ENCODE measurements at regions of chr7 and their contacts with region 1.

Region 1: DNA sequence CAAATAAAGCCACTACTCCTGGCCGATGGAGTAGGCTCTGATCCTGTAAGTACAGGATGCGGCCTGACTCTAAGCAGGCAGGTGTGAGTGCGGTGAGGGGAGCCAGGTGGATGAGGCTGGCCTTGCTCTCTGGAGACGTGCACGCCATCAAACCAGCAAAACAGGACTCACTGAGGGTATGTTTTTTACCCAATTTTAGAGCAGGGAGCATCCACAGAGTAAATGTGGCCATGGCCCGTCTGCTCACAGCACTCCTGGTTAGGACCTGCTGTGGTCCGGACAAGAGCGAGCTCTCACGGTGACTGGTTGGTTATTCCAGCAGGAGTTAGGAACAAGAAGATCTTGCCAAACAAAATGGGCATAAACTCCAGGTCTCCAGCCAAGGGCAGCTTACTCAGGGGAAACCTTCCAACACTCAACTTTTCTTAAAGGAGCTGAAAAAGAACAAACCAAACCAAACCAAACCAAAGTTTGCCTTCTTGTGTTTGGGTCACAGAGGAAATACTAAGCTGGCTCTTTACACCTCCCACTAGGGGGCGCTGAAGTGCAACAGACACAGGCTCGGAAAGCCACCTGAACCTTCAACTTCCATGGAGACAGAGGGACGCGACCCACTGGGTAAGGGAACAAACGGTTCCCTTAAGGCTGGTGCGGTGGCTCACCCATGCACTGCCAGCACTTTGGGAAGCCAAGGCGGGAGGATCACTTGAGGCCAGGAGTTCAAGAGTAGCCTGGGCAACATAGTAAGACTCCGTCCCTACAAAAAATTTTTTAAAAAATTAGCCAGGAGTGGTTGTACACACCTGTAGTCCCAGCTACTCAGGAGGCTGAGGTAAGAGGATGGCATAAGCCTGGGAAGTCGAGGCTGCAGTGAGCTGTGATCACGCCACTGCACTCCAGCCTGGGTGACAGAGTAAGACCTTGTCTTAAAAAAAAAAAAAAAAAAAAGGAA is 122.4 kb downstream of the CLEC2L start:
- DNase-seq: peak; percentile 83
- ATAC-seq: peak; percentile 82
- H3K4me3 ChIP-seq: no peak overlapping the region
- H3K27ac ChIP-seq: no peak overlapping the region
- H3K4me1 ChIP-seq: peaks cover 37% of the 10 kb centered on the region
- H3K27me3 ChIP-seq: no peaks in the 10 kb centered on the region
- CTCF ChIP-seq: peak; percentile 94

Region 2: DNA sequence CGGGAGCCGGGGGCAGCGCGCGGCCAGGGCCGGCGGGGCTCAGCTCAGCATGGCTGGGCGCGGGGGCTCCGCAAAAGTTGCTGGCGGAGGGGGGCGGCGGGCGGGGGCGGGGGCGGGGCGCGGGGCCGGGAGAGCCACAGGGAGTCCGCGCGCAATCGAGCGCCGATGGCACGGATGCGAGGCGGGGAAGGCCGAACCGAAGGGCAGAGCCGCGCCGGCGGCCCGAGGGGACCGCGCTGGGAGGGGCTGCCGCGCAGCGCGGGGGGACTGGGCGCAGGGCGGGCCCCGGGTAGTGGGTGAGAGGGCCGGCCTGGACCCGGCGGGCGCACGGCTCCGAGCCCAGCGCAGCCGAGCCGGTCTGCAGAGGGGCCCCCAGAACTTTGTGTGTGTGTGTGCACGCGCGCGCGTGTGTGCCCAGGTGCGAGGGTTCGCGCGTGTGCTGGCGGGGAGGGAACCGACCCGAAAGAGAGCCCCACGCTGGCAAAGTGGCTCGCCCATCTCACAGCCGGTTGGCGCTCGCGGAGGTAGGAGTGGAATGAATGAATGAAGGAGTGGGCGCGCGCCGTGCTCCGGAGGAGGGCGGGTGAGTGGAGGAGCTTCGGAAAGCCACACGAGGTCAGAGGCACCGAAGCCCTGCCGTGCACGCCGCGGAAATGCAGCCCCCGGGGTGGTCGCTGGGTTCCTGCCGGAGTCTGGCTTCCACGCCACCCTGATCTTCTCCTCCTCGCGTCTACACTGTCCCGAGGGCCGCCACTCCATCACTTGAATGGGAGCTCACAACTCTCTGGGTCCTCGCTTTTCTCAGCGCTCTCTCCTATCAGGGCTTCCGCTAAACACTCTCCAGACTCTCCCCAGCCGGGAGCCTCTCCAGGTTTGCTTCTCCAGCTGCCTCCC is 132.3 kb after region 1 on chr7 and contains the start of gene HIPK2:
- intact Hi-C with region 1: loop called (anchors 10 kb)
- DNase-seq: peak; percentile 91
- ATAC-seq: peak; percentile 90
- H3K4me3 ChIP-seq: peak within 1 kb of the TSS; percentile 79
- H3K27ac ChIP-seq: peak within 1 kb of the TSS; percentile 92
- H3K4me1 ChIP-seq: peaks cover 15% of the 10 kb centered on the region
- H3K27me3 ChIP-seq: no peaks in the 10 kb centered on the region
- CTCF ChIP-seq: no peak
- total RNA-seq, gene HIPK2: 64.3 TPM

Region 3: DNA sequence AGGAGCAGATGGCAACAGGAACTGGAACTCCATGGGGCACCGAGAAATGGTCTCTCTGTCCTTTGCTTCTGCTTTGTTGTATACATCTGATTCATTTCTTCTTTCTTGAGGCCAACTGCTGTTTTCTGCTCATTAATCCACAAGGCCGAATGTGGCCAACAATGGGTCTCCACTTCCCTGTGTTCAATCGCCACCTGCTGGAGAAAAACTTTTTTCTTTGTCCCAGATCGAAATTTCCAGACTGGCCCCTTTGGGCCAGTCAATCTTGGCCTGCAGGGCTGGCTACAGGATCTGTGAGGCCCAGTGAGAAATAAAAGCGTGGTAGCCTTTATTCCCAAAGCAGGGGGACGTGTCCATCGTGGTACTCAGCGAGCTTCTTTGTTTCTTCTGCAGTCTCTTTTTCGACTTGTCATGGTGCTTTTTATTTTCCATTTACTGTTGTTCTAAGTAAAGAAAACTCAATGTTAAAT is 358.1 kb after region 1 on chr7:
- intact Hi-C with region 1: loop called (anchors 5 kb)
- DNase-seq: peak; percentile 25
- ATAC-seq: peak; percentile 45
- H3K4me3 ChIP-seq: no peak overlapping the region
- H3K27ac ChIP-seq: no peak overlapping the region
- H3K4me1 ChIP-seq: no peaks in the 10 kb centered on the region
- H3K27me3 ChIP-seq: no peaks in the 10 kb centered on the region
- CTCF ChIP-seq: peak; percentile 48